PC-9 (cell line): ENCODE measurements at regions of chr14 and their contacts with region 1.

Region 1: GRCh38 chr14:100471441-100472093 is 115.7 kb downstream of the BEGAIN start:
- DNase-seq: peak; percentile 49 to 85
- H3K4me3 ChIP-seq: no peak overlapping the region
- H3K27ac ChIP-seq: peak overlapping the region; percentile 63
- H3K4me1 ChIP-seq: peaks cover 37% of the 10 kb centered on the region
- H3K27me3 ChIP-seq: no peaks in the 10 kb centered on the region
- CTCF ChIP-seq: no peak

Region 2: DNA sequence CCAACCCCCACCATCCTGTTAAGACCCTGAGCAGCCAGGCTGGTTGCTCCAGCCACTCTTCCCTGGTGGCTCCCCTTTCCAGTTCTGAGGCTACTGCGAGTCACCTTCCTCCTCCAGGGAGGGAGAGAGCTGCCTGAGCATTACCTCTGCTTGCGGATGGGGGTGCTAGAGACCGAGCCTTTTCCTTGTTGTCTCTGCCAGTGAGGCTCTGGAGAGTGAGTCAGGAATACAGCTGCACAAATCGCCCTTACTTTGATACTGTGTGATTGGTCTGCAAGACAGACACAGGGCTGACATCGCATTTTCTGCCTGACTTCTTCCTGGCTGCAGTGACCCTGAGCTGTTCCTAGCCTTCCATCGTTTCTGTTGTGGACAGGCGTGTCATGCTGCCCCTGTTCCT is 54.1 kb before region 1 on chr14:
- CTCF ChIA-PET with region 1: no interaction called
- POLR2A ChIA-PET with region 1: no interaction called
- intact Hi-C with region 1: loop called (anchors 2 kb)
- DNase-seq: peak; percentile 55 to 70
- H3K4me3 ChIP-seq: no peak overlapping the region
- H3K27ac ChIP-seq: no peak overlapping the region; the same call in 1 of the 2 replicates
- H3K4me1 ChIP-seq: peaks cover 15% of the 10 kb centered on the region
- H3K27me3 ChIP-seq: no peaks in the 10 kb centered on the region
- CTCF ChIP-seq: peak; percentile 75